ENCODE measurements at regions of chr11 and their contacts with region 1.

Region 1: GRCh38 chr11:121372671-121373429 is 79.3 kb upstream of the SORL1 start:
- DNase-seq: peak; percentile 90
- H3K4me3 ChIP-seq: peak overlapping the region; percentile 49
- H3K27ac ChIP-seq: peak overlapping the region; percentile 98
- H3K4me1 ChIP-seq: peaks cover 98% of the 10 kb centered on the region
- CTCF ChIP-seq: no peak

Region 2: DNA sequence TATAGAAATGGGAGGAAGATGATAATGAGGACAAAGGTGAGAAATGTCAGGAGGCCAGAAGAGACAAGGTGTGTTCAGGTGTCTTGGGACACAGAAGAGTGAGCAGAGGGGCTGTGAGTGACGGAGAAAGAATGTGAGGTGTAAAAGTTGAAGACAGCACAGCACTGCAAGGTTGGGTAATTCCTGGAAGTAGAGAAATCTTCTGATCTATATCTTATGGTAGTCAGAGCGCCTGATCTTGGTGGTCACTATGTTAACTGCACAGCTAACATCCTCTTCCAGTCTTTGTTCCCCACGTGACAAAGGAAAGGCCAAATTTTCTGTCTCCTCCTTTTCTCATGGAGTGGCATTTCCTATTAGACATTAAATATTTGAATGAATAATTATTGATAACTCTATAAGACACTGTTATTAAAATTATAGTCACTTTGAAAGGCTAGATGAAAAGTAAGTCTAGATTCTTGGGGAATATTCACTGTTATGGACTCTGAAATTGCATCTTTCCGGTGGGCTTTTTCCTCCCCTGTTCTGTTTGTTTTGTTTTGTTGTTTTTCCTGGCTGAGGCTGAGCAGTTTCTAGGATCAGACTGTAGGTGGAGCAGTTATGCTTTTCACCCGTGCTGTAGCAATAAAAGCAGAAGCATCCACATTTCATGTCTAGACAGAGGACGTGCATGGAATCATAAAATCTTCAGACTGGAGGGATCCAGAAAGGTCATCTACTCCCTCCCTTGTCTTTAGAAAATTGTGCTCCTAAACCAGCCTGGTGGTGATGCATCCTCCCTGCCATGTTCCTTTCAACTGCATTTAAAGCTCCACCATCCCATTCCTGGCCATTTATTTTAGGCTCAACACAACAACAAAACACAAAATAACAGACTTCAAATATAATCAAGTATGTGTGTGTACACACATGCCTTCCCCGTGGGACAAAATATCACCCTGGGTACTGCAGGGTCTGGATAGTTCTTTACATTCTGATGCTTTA is 53.7 kb before region 1 on chr11:
- CTCF ChIA-PET with region 1: no interaction called
- POLR2A ChIA-PET with region 1: interaction called, 29 read pairs
- intact Hi-C with region 1: loop called (anchors 2 kb)
- DNase-seq: peak; percentile 82
- H3K4me3 ChIP-seq: no peak overlapping the region
- H3K27ac ChIP-seq: peak overlapping the region; percentile 1
- H3K4me1 ChIP-seq: peaks cover 58% of the 10 kb centered on the region
- CTCF ChIP-seq: peak; percentile 99

Region 3: GRCh38 chr11:121334973-121335710 is 37.7 kb before region 1 on chr11:
- CTCF ChIA-PET with region 1: interaction called, 3 read pairs
- POLR2A ChIA-PET with region 1: interaction called, 56 read pairs
- intact Hi-C with region 1: no loop called
- DNase-seq: peak; percentile 43
- H3K4me3 ChIP-seq: no peak overlapping the region
- H3K27ac ChIP-seq: peak overlapping the region; percentile 63
- H3K4me1 ChIP-seq: peaks cover 65% of the 10 kb centered on the region
- CTCF ChIP-seq: peak; percentile 78

Region 4: DNA sequence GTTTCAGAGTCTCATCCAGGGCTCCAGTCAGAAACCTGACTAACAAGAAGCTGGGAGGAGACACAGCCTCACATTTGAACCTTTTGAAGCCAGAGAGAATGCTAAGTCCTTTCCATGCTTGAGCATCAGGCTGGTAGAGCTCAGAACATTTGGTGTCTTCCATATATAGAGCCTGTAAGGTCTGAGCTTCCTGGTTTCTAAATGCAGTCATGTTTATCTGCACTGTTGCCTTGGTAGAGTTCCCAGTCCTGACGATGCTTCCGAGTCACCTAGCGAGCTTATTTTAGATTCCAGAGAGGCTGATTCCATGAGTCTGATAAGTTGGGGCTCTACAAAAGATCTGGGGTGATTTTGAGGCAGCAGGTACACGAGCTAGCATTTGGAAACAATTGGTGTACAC is 10.9 kb after region 1 on chr11:
- CTCF ChIA-PET with region 1: interaction called, 6 read pairs
- POLR2A ChIA-PET with region 1: interaction called, 88 read pairs
- intact Hi-C with region 1: no loop called
- DNase-seq: no peak
- H3K4me3 ChIP-seq: no peak overlapping the region
- H3K27ac ChIP-seq: peak overlapping the region; percentile 84
- H3K4me1 ChIP-seq: peaks cover 92% of the 10 kb centered on the region
- CTCF ChIP-seq: no peak

Region 5: DNA sequence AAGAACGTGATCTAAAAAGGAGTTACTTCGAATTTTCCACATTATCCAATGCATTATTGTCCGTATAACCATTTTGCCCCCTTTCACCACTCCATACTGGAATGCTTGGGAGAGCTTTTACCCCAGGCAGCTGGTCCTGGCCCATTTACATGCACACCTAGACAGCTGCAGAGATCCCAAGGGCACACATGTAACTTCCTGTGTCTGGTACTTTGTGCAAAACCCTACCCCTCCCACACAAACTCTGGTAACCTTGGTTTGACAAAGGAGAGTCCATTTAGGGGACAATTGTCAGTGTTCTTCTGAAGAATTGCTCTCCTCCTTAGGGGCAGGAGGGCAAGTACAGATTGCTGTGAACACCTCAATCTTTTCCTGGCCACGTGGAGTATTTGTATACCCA is 21.9 kb after region 1 on chr11:
- CTCF ChIA-PET with region 1: interaction called, 4 read pairs
- POLR2A ChIA-PET with region 1: interaction called, 88 read pairs
- intact Hi-C with region 1: no loop called
- DNase-seq: peak; percentile 74
- H3K4me3 ChIP-seq: no peak overlapping the region
- H3K27ac ChIP-seq: peak overlapping the region; percentile 55
- H3K4me1 ChIP-seq: peaks cover 63% of the 10 kb centered on the region
- CTCF ChIP-seq: no peak

Region 6: GRCh38 chr11:121417055-121417551 is 44.3 kb after region 1 on chr11:
- CTCF ChIA-PET with region 1: interaction called, 3 read pairs
- POLR2A ChIA-PET with region 1: interaction called, 14 read pairs
- intact Hi-C with region 1: loop called (anchors 5 kb)
- DNase-seq: peak; percentile 41
- H3K4me3 ChIP-seq: no peak overlapping the region
- H3K27ac ChIP-seq: peak overlapping the region; percentile 91
- H3K4me1 ChIP-seq: peaks cover 79% of the 10 kb centered on the region
- CTCF ChIP-seq: no peak

Region 7: DNA sequence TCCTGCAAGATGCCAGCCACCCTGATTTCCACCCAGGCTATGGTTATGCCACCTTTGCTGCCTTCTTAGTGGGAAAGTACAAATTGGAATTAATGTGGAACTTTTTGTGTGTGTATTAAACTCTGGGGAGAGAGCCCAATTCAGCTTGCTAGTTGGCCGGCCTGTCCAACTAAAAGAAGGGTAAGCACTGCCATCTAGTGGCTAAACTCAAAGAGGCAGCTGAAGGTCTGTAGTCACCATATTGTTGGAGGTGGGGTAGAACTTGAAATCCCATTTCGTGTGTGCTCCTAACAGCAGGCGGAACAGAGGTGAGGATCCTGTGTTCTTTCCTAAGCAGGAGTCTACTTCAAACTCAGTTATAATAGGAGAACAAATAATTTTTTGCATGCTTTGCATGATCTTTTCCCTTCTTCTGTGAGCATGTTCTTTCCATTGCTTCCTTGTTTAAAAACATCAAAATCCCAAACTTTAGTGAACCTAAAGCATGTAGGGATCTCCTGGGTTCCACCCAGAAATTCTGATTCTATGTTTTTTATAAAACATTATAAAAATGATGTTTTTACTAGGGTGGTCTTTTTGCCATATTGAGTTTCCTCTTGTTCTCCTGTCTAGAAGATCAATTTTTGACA is 218.7 kb after region 1 on chr11:
- CTCF ChIA-PET with region 1: no interaction called
- POLR2A ChIA-PET with region 1: interaction called, 3 read pairs
- intact Hi-C with region 1: loop called (anchors 2 kb)
- DNase-seq: peak; percentile 87
- H3K4me3 ChIP-seq: peak overlapping the region; percentile 66
- H3K27ac ChIP-seq: peak overlapping the region; percentile 98
- H3K4me1 ChIP-seq: peaks cover 69% of the 10 kb centered on the region
- CTCF ChIP-seq: peak; percentile 97